Testis (tissue), 5 donors: ENCODE measurements at regions of chr5 and their contacts with region 1.

Region 1: DNA sequence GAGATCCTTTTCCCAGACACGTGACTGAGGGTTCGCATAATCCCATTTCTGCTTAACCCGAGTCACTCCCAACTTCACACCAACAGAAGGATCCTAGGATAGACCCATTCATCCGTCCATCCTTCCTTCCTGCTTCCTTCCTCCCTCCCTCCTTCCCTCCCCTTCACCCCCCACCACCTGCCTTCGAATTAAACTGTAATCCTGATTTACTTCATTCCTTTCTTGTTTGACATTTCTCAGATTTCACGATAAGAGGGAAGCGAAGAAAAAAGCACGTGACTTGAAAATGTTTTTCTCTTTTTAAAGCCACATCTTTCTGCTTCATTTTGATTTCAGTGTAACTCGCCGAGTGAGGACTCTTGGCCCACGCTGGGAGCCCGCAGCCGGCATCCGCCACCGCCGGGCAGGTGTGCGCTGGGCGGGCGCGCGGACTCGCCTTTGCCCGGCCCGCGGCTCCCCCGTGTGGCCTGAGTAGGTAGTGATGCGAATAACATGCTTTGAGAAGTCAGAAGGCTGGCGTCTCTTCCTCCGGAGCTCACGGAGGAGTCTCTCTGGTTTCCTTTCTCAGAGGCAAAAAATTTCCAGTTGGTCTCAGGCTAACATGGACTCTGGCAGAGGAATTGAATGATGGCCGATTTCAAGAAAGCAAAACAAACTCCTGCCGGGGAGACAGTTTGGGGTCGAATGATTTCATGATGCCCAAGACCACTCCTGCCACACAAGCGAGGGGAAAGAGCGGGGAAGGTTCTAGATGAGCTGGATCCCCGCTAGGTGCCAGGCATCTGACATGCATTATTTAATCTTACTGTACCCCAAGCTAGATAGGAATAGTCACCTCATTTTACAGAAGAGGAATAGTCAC is 117.7 kb downstream of the SLC12A2 start:
- DNase-seq: peak; percentile 90
- H3K4me3 ChIP-seq: peak overlapping the region in 1 of 2 donors; percentile 1
- H3K27ac ChIP-seq: no peak overlapping the region
- H3K4me1 ChIP-seq: no peaks in the 10 kb centered on the region
- H3K27me3 ChIP-seq: no peaks in the 10 kb centered on the region
- CTCF ChIP-seq: peak; percentile 67 to 90 (median 87)
- POLR2A ChIP-seq: no peak

Region 2: GRCh38 chr5:127564002-127564769 is 637.1 kb before region 1 on chr5:
- intact Hi-C with region 1: loop called (anchors 10 kb)
- DNase-seq: peak; percentile 77
- H3K4me3 ChIP-seq: no peak overlapping the region
- H3K27ac ChIP-seq: no peak overlapping the region
- H3K4me1 ChIP-seq: peaks cover 2% of the 10 kb centered on the region
- H3K27me3 ChIP-seq: no peaks in the 10 kb centered on the region
- CTCF ChIP-seq: peak; percentile 63 to 73 (median 65)
- POLR2A ChIP-seq: no peak

Region 3: DNA sequence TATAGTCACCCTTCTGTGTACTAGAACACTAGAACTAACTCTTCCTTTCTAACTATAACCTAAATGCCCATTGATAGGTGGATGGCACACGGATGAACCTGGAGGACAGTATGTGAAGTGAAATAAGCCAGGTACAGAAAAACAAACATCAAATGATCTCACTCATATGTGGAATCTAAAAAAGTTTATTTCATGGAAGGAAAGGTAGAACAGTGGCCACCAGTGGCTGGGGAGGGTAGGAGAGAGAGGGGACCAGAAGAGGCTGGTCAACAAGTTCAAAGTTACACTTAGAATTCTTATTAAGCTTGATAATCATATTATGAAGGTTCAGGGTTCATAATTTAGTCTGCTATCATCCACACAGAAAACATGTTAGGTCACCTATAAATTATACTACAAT is 225.4 kb before region 1 on chr5:
- intact Hi-C with region 1: no loop called
- DNase-seq: no peak
- H3K4me3 ChIP-seq: no peak overlapping the region
- H3K27ac ChIP-seq: no peak overlapping the region
- H3K4me1 ChIP-seq: no peaks in the 10 kb centered on the region
- H3K27me3 ChIP-seq: no peaks in the 10 kb centered on the region
- CTCF ChIP-seq: no peak
- POLR2A ChIP-seq: no peak